Heart right ventricle (tissue), 16 donors: ENCODE measurements at regions of chr9 and their contacts with region 1.

Region 1: DNA sequence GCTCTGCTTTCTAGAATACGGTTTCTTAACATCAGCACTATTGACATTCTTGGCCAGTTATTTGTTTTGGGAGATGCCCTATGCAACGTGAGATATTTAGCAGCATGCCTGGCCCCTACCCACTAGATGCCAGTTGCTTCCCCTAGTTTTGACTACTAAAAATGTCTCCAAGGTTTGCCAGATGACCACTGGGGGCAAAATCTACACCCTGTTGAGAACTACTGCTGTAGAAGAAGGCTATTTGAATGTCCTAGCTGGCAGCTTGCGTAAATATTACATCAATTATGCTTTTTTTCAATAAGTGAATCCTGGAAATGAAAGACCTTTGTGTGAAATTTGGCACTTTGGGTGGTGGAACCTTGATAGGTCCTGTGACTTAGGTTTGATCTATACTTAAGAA is 5.0 kb downstream of the NCBP1 start:
- DNase-seq: no peak
- ATAC-seq: no peak
- H3K4me3 ChIP-seq: no peak overlapping the region
- H3K27ac ChIP-seq: no peak overlapping the region
- H3K4me1 ChIP-seq: peaks cover 2 to 65% (median 52%) of the 10 kb centered on the region in 9 donors
- H3K27me3 ChIP-seq: no peaks in the 10 kb centered on the region
- CTCF ChIP-seq: no peak

Region 2: GRCh38 chr9:97689401-97689800 is 50.7 kb after region 1 on chr9:
- intact Hi-C with region 1: loop called in 2 of 10 experiments (anchors 5 kb)
- DNase-seq: no peak
- ATAC-seq: no peak
- H3K4me3 ChIP-seq: no peak overlapping the region
- H3K27ac ChIP-seq: no peak overlapping the region
- H3K4me1 ChIP-seq: peaks cover 0 to 28% (median 15%) of the 10 kb centered on the region in 9 donors
- H3K27me3 ChIP-seq: no peaks in the 10 kb centered on the region
- CTCF ChIP-seq: no peak